Posterior vena cava (tissue), 2 donors: ENCODE measurements at regions of chr5 and their contacts with region 1.

Region 1: GRCh38 chr5:96067894-96068614 is 106.4 kb upstream of the ELL2 start:
- DNase-seq: no peak

Region 2: GRCh38 chr5:96049398-96050272 is 18.4 kb before region 1 on chr5:
- intact Hi-C with region 1: no loop called
- DNase-seq: no peak

Region 3: DNA sequence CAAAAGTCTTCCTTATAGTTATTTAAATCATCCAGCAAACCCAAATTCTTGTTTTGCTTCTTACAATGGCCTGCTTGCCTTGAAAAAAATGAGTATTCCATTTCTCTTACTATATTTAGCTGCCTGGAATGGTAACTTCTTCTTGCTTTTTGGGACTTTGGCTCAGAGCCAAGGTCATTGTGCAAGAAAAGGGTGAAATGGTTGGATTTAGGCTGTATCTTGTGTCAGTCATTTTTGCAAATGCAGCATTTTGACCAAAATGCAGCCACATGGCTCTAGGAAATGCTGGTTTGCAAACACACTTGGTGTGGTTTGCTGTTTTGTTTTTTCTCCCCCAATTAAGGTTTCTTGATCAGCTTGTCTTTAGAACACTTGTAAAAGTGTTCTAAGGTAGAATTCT is 26.9 kb after region 1 on chr5:
- intact Hi-C with region 1: loop called in 1 of 2 experiments (anchors 1 kb)
- DNase-seq: no peak

Region 4: DNA sequence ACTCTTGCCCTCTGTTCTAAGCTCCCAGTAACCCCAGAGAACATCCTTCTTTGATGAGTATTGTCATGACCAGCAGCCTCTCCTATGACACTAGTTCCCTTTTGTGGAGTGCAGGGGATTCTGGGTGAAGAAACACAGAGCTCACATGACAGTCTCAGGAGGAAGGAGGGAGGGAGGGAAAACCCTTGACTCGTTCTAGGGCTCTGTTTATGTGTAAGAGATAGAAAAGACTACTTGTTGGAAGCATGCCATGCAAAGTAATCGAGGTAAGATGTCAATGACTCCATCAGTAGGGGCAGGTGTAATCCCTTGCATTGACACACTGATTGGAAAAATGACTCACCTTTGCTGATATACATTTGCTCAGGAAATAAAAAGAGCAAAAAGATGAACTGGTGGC is 83.8 kb after region 1 on chr5:
- intact Hi-C with region 1: no loop called
- DNase-seq: no peak

Region 5: DNA sequence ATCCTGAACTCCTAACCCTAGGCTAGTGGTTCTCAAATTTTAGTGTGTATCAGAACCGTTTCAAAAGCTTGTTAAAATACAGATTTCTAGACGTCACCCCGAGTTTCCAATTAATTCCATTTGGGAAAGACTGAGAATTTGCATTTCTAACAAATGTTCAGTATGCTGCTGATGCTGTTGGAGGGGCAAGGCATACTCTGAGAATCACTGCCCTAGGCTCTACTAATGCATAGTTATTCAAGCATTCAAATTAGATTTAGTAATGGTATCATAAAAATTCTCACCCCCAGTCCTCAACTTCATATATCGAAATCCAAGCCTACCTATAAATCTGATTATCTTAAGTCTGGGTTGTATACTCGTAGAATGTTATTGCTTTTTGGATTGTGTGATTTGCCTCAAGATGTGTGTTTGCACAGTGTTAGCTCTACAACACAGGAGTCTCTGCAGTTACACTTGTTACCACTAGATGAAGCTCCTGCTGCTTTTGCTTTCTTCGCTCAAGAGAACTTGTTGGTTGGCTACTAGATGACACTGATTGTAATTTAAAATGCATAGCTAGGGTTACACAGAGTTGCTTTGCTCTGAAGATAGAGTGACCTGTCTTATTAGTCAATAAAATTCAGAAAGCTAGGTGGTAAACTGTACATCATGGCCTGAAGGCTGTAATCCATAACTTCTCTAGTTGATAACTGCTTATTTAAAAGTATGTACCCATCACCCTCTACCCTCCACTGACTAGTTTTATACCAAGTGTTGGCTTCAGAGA is 800.7 kb after region 1 on chr5:
- intact Hi-C with region 1: loop called in 1 of 2 experiments (anchors 5 kb)
- DNase-seq: no peak